Panc1 (cell line): ENCODE measurements at regions of chr2 and their contacts with region 1.

Region 1: DNA sequence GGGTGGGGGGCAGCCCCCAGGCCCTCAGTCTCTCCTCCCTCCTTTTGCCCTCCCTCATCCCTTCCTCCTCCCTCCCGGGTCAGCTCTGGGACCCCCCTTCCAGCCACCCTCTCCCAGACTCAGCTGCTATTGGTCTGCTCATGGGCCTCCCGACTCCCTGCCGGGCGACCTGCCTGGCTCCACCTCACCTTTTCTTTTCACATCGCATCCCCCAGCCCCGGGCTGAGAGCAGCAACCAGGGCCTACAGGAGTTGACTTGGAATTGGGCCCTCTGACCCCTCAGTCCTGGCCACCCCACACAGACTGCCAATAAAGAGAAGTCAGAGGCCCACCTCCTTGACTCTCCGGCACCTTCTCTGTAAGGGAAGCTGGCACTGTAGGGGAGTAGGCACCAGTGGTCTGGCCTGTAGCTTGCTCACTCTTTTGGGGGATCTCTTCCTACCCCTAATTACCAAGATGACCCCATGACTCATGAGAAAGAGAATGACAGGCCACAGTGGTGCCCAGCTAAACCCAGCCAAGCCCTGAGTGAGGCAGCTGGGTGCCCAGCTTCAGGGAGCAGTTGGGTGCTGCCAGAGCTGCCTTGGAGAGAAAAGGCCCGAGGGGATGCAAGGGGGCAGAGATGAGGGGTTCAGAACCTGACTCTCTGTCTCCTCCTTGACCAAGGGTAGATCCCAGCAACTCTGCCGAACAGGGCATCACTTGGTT is 2.0 kb upstream of the ECEL1 start:
- DNase-seq: no peak
- ATAC-seq: no peak
- H3K4me3 ChIP-seq: no peak overlapping the region
- H3K27ac ChIP-seq: no peak overlapping the region
- H3K4me1 ChIP-seq: no peaks in the 10 kb centered on the region
- H3K27me3 ChIP-seq: no peaks in the 10 kb centered on the region; the same call in 1 of the 2 replicates
- CTCF ChIP-seq: no peak

Region 2: DNA sequence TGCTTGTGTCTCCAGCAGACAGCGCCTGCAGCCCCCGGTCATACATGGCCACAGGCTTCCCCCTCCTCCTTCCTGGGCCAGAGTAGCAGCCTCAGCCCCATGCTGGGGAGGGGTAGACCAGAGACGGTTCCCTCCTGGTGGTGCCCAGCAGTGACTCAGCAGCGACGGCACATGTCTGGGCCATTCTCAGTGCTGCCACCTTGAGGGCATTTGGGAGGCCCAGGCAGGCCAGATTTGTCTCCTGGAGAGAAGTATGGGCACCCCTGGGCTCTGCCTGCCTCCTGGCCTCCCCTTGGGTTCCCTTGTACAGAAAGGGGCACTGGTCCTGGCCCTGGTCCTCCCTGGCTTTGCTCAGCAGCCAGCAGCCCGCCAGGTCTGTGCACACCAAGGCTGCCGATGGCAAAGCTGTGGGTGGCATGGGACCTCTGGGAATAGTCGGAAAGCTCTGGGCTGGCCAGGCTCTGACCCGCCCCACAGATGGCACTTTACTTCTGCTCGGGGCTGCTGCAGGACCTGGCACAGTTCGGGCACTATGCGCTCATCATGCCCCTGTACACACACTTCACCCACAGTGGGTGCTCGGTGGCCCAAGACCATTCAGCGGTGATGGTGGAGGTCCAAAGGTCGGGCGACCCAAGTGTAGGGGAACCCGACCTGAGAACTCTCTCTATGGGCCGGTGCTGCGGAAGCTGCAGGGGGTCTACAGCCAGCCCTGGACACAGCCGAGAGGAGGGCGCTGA is 45.1 kb before region 1 on chr2:
- CTCF ChIA-PET with region 1: interaction called, 10 read pairs
- POLR2A ChIA-PET with region 1: no interaction called
- in situ Hi-C with region 1: no loop called
- intact Hi-C with region 1: no loop called
- DNase-seq: peak; percentile 27
- ATAC-seq: peak; percentile 48
- H3K4me3 ChIP-seq: no peak overlapping the region
- H3K27ac ChIP-seq: no peak overlapping the region; the same call in 1 of the 2 replicates
- H3K4me1 ChIP-seq: no peaks in the 10 kb centered on the region; the same call in none of the 2 replicates
- H3K27me3 ChIP-seq: no peaks in the 10 kb centered on the region
- CTCF ChIP-seq: peak; percentile 86

Region 3: DNA sequence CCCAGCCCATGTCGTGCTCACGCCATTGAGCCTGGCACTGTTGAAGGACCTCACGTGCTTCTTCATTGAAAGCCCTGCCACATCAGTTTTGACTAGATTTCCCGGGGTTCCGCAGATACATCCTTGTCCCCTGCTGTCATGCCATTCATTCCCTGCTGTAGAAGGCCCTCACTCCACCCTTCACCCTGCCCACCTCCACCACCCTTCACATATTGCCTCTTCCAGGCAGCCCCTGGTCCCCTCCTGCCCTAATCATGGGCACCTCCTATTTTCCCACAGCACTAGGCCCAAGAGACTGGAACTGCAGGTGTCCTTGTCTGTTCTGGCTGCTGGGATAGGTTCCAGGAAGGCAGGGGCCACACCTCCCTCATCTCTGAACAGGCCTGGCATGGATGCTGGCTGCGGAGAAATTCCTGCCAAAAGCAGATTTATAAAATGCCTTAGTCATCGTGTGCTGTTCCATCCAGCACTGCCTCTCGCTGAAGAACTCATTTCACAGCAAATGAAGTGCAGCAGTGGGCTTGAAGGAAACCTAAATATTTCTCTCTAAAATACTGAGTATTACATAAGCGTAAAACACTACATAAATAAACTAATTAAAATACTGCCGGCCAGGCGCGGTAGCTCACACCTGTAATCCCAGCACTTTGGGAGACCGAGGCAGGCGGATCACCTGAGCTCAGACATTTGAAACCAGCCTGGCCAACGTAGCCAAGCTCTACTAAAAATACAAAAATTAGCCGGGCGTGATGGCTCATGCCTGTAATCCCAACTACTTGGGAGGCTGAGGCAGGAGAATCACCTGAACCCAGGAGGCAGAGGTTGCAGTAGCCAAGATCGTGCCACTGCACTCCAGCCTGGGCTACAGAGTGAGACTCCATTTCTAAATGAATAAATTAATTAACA is 99.3 kb after region 1 on chr2:
- CTCF ChIA-PET with region 1: no interaction called
- POLR2A ChIA-PET with region 1: no interaction called
- in situ Hi-C with region 1: no loop called
- intact Hi-C with region 1: no loop called
- DNase-seq: no peak
- ATAC-seq: peak; percentile 54
- H3K4me3 ChIP-seq: no peak overlapping the region
- H3K27ac ChIP-seq: no peak overlapping the region
- H3K4me1 ChIP-seq: peaks cover 9% of the 10 kb centered on the region
- H3K27me3 ChIP-seq: no peaks in the 10 kb centered on the region
- CTCF ChIP-seq: no peak